BJ (cell line): ENCODE measurements at regions of chr1 and their contacts with region 1.

Region 1: DNA sequence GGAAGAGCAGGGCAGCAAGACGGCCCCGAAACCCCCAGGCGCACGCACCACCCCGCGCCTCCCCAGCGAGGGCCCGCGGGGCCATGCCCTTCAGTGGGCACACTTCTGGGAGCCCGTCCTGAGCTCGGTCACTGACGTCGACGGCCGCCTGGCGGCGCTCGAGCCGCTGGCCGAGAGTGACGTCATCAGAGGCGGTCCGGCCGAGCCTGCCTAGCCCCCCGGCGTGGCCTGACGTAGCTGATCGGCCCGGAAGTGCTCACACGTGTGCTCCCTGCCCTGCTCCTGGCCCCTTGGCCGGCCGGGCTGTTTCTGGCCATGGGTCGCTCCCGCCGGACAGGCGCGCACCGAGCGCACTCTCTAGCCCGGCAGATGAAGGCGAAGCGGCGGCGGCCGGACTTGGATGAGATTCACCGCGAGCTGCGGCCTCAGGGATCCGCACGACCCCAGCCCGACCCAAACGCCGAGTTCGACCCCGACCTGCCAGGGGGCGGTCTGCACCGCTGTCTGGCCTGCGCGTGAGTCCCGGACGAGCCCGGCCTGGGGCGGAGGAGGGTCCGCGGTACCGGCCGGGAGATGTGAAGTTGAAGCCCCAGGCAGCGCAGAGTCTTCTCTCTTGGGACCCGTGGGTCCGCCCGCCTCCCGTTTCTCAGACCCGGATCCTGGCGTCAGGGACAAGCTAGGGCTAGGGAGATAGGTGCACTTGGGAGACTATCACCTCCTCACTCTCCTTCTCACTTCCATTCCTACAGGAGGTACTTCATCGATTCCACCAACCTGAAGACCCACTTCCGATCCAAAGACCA is at the start of gene ZNF593:
- DNase-seq: peak; percentile 28
- H3K4me3 ChIP-seq: peak within 1 kb of the TSS; percentile 58
- H3K27me3 ChIP-seq: no peaks in the 10 kb centered on the region; the same call in 1 of the 2 replicates
- CTCF ChIP-seq: peak; percentile 93
- polyA plus RNA-seq, gene ZNF593: 26.3 and 30.2 TPM in 2 replicates

Region 2: GRCh38 chr1:26181586-26182382 is 11.9 kb after region 1 on chr1:
- CTCF ChIA-PET with region 1: interaction called, 21 read pairs
- POLR2A ChIA-PET with region 1: no interaction called
- DNase-seq: no peak
- H3K4me3 ChIP-seq: no peak overlapping the region
- H3K27me3 ChIP-seq: no peaks in the 10 kb centered on the region
- CTCF ChIP-seq: no peak

Region 3: DNA sequence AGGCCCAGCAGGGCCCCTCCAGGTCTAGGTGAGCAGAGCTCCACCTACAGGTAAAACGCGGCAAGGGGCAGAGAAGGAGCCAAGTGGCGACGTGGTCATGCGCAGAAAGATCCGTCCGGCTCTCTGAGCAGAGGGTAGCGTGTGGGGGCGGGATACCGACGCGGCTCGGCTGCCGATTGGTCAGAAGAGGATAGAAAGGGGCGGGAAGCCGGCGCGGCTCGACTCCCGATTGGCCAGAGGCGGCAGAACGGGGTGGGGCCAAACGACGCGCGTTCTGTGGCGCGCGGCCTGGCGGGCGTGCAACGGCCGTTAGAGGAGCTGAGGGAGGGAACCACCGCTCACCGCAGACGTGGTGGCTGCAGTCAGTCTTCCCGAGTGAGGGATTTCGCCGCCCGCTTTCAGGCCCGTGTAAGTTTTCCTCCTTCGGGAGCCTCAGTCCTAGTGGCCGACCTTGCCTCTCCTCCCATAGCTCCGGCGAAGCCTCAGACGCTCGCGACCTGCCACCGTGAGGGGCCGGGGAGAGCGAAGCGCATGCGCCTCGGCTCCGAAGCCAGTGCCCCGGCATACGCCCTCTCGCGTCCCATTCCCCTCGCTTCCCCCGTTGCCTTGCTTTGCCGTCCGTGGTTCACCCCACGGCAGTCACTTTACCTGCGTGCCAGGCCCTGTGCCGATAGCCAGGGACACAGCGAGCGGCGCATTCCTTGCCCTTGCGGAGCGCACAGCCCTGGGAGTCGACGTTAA is 64.2 kb after region 1 on chr1 and contains the start of gene CEP85:
- CTCF ChIA-PET with region 1: interaction called, 25 read pairs
- POLR2A ChIA-PET with region 1: no interaction called
- DNase-seq: peak; percentile 70
- H3K4me3 ChIP-seq: peak within 1 kb of the TSS; percentile 64
- H3K27me3 ChIP-seq: no peaks in the 10 kb centered on the region
- CTCF ChIP-seq: peak; percentile 91
- polyA plus RNA-seq, gene CEP85: 9.4 and 10.8 TPM in 2 replicates